Transverse colon (tissue), 4 donors: ENCODE measurements at regions of chr15 and their contacts with region 1.

Region 1: DNA sequence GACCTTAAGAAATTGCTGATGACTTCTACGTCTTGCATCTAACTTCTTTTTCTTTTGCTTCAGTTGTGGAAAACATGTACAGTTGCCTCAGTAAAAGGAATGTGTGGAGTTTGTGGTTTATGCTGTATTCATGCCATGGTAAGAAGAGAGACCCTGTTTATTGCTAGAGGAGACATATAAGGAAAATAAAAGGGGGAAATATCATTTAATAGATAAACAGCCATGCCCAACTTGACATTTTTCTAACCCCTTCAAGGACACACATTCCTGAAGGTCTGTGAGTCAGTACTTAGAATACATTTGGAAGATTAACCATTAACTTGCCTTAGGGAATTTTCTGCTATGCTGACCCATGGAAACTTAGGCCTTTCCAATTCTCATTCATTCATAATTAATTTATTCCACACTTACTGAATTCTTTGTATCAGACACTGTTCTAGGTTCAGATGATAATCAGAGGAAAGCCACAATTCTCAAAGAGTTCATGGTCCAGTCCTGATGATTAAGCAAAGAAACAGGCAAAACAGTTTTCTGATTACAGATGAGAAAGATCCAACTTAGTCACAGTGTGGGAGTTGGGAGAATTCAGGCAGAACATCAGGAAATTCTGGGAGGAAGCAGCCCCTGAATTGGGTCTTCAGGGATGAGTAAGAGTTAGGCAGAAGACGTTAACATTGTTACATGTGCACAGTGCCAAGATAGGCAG is 329.8 kb upstream of the RASGRP1 start:
- DNase-seq: no peak
- H3K4me3 ChIP-seq: no peak overlapping the region
- H3K27ac ChIP-seq: peak overlapping the region in 3 of 4 donors; percentile 16 to 23 (median 18)
- H3K4me1 ChIP-seq: peaks cover 0 to 23% (median 7%) of the 10 kb centered on the region in 4 donors
- H3K27me3 ChIP-seq: no peaks in the 10 kb centered on the region
- CTCF ChIP-seq: no peak
- EP300 ChIP-seq: no peak
- POLR2A ChIP-seq: no peak

Region 2: GRCh38 chr15:38843736-38844590 is 50.4 kb before region 1 on chr15:
- in situ Hi-C with region 1: no loop called
- intact Hi-C with region 1: loop called (anchors 10 kb)
- DNase-seq: no peak
- H3K4me3 ChIP-seq: no peak overlapping the region
- H3K27ac ChIP-seq: no peak overlapping the region
- H3K4me1 ChIP-seq: peaks cover 0 to 11% (median 8%) of the 10 kb centered on the region in 4 donors
- H3K27me3 ChIP-seq: no peaks in the 10 kb centered on the region
- CTCF ChIP-seq: no peak
- EP300 ChIP-seq: no peak
- POLR2A ChIP-seq: no peak